ENCODE measurements at regions of chr12 and their contacts with region 1.

Region 1: GRCh38 chr12:3073438-3074250 is 3.5 kb upstream of the TSPAN9 start:
- DNase-seq: peak; percentile 91
- ATAC-seq: peak; percentile 70
- H3K4me3 Mint-ChIP-seq: no peak overlapping the region
- H3K27ac Mint-ChIP-seq: no peak overlapping the region
- H3K4me1 Mint-ChIP-seq: peaks cover 2% of the 10 kb centered on the region
- H3K27me3 Mint-ChIP-seq: peaks cover 2% of the 10 kb centered on the region

Region 2: DNA sequence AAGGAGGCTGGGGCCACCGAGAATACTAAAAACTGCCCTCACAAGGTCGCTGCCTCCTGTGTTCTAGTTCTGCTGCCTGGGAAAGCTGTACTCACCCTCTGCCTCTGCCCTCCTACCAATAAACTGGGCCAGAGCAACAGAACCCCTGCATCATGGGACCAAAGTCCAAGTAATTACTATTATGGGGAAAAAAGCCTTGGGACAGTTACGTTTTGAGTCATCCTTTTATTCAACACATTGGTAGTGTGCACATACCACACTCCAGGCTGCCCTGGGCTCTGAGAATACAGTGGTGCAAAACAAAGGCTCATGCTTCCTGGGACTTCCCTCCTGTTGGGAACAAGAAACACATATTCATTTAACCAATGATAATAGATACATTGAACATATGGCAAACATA is 971.9 kb before region 1 on chr12:
- CTCF ChIA-PET with region 1: no interaction called
- POLR2A ChIA-PET with region 1: no interaction called
- intact Hi-C with region 1: no loop called
- DNase-seq: no peak
- ATAC-seq: no peak
- H3K4me3 Mint-ChIP-seq: no peak overlapping the region
- H3K27ac Mint-ChIP-seq: no peak overlapping the region
- H3K4me1 Mint-ChIP-seq: no peaks in the 10 kb centered on the region
- H3K27me3 Mint-ChIP-seq: no peaks in the 10 kb centered on the region

Region 3: GRCh38 chr12:2691006-2691344 is 382.7 kb before region 1 on chr12:
- CTCF ChIA-PET with region 1: no interaction called
- POLR2A ChIA-PET with region 1: no interaction called
- intact Hi-C with region 1: loop called in 1 of 2 experiments (anchors 2 kb)
- DNase-seq: peak; percentile 76
- ATAC-seq: peak; percentile 66
- H3K4me3 Mint-ChIP-seq: peak overlapping the region; percentile 79
- H3K27ac Mint-ChIP-seq: peak overlapping the region; percentile 79
- H3K4me1 Mint-ChIP-seq: peaks cover 26% of the 10 kb centered on the region
- H3K27me3 Mint-ChIP-seq: peaks cover 5% of the 10 kb centered on the region

Region 4: DNA sequence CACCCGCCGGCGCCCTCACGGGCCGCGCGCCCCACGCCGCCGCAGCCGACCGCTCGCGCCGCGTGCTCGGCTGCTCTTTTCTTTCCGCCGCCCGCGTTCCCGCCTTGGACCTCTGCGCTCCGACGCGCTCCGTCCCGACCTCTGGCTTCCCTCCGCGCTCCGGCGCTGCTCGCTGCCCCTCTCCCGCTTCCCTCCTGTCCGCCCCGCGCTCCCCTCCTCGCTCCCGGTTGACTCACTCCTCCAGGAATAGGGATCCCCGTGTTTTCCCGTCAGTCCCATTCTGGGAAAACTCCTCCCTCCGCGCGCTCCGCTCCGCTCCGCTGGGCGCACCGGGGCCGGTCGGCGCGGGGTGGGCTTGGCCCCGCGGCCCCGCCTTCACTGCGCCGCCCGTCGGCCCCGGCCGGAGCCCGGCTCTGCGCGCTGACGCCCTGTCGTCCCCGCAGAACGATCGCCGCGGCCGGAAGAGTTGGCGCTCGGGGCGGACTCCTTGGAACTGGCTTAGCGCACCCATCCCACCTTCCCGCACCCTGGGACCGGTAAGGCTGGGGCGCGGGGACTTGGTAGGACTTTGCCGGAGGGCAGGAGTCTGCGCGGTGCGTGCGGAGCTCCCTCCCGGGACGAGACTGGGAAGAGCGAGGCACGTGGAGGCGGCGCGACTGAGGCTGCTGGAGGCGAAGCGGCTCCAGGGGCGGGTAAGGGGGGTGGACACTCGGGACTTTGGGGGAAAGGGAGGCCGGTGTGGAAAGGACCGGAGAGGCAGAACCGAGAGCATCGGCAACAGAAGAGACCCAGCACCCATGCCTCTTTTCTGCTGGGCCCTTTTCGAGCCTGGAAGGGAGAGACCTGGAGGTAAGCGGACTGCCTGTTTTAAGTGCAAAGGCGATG is 113.9 kb before region 1 on chr12:
- CTCF ChIA-PET with region 1: no interaction called
- POLR2A ChIA-PET with region 1: no interaction called
- intact Hi-C with region 1: loop called in 1 of 2 experiments (anchors 1 kb)
- DNase-seq: peak; percentile 51
- ATAC-seq: peak; percentile 23
- H3K4me3 Mint-ChIP-seq: peak overlapping the region; percentile 61
- H3K27ac Mint-ChIP-seq: peak overlapping the region; percentile 49
- H3K4me1 Mint-ChIP-seq: peaks cover 18% of the 10 kb centered on the region
- H3K27me3 Mint-ChIP-seq: peaks cover 54% of the 10 kb centered on the region

Region 5: DNA sequence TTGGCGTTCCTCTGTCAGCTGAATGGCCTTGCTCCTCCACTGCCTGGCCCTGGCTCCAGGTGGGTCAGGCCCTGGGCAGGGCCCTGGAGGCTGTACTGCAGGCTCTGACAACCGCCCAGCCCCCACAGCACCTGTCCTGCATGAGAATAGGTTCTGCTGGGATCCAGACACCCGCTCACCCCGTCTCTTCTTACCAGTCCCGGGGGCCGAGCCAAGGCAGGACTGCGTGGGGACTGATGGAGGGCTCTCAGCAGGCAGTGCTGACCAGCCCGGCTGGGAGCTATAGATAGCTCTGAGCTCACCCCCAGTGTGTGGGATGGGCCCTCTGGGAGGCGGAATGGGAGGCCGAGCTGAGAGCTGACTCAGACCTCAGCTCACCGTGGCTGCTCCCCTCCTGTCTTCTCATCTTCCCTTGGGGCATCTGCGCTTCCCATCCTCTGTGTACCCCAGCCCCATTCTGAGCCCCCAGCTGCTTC is 74.8 kb before region 1 on chr12:
- CTCF ChIA-PET with region 1: no interaction called
- POLR2A ChIA-PET with region 1: no interaction called
- intact Hi-C with region 1: no loop called
- DNase-seq: no peak
- ATAC-seq: no peak
- H3K4me3 Mint-ChIP-seq: no peak overlapping the region
- H3K27ac Mint-ChIP-seq: no peak overlapping the region
- H3K4me1 Mint-ChIP-seq: no peaks in the 10 kb centered on the region
- H3K27me3 Mint-ChIP-seq: no peaks in the 10 kb centered on the region

Region 6: DNA sequence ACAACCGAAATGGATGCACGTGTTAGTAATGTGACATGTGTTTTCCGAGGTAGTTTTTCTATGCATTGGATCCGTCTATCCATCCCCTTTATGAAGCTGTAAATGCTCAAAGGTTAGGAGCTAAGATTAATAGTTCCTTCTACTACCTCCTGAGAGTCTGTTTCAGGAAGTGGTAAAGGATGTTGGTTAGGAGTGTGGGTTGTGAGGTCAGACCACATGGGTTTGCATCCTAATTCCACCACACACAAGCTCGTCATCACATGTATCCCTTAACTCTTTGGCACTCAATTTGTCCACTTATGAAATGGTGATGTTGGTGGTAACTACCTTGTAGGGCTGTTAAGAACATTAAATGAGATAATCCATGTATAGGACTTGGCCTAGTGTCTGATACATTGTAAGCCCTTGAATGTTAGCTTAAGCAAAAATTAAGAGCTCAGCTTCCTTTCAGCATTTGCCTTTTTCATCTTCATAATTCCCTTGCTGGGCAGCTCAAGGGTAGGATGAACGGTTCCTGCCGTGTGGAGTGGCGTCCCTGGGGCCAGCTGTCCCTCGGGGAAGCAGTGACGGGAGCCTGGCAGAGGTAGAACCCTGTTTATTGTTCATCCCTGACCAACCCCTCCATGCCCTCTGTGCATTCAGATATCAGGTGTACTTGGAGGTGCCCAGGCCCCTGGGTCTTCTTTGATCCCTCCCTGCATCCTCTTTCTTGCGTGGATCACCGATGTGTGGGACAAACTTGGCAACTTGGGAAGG is 55.8 kb after region 1 on chr12:
- CTCF ChIA-PET with region 1: interaction called, 8 read pairs
- POLR2A ChIA-PET with region 1: no interaction called
- intact Hi-C with region 1: loop called in 1 of 2 experiments (anchors 5 kb)
- DNase-seq: peak; percentile 49
- ATAC-seq: peak; percentile 36
- H3K4me3 Mint-ChIP-seq: no peak overlapping the region
- H3K27ac Mint-ChIP-seq: no peak overlapping the region
- H3K4me1 Mint-ChIP-seq: peaks cover 21% of the 10 kb centered on the region
- H3K27me3 Mint-ChIP-seq: peaks cover 54% of the 10 kb centered on the region

Region 7: DNA sequence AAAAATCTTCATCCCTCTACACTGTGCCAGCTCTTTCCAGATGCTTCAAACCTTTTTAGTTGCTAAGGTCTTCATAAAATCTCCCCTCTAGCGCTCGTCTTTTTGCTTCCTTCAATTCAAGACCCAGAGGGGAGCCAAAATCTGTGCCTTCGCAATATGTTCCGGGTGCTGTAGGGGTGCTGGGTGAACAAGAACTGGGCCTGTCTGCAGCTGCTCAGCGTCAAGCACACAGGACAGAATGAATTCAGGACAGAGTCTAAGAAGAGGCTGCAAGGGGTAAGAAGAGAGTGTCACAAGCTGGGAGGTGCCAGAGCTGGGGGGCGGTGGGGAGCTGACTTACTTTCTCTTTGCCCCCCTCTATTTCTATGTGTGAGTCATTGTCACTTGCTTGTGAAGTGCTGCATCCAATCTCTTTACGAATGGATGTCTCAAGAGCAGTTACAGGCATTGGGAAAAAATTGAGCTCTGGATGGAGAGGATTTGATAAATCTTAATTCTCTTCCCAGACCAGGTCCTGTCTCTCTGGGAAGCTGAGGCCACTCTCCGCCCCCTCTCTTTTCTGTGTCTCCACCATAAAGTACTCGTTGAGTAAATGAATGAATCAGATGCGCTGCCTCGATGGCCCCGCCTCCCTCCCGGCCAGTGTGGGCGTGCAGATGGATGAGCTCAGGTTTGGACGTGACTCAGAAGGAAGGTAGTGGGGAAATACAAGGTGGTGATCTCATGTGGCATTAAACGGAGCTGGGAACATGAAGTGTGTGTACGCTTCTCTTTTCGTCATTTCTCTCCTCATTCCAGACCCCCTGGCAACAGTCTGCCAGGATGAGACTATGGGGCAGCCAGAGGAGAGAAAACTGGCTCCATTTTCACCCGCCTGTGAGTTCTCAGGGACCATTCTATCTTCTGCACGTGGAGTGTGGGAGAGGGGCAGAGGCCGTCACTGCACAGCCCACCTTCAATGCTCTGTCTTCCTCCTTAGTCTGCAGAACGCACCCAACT is 94.9 kb after region 1 on chr12:
- CTCF ChIA-PET with region 1: interaction called, 5 read pairs
- POLR2A ChIA-PET with region 1: no interaction called
- intact Hi-C with region 1: loop called in 1 of 2 experiments (anchors 1 kb)
- DNase-seq: peak; percentile 88
- ATAC-seq: peak; percentile 95
- H3K4me3 Mint-ChIP-seq: no peak overlapping the region
- H3K27ac Mint-ChIP-seq: no peak overlapping the region
- H3K4me1 Mint-ChIP-seq: peaks cover 13% of the 10 kb centered on the region
- H3K27me3 Mint-ChIP-seq: peaks cover 6% of the 10 kb centered on the region

Region 8: DNA sequence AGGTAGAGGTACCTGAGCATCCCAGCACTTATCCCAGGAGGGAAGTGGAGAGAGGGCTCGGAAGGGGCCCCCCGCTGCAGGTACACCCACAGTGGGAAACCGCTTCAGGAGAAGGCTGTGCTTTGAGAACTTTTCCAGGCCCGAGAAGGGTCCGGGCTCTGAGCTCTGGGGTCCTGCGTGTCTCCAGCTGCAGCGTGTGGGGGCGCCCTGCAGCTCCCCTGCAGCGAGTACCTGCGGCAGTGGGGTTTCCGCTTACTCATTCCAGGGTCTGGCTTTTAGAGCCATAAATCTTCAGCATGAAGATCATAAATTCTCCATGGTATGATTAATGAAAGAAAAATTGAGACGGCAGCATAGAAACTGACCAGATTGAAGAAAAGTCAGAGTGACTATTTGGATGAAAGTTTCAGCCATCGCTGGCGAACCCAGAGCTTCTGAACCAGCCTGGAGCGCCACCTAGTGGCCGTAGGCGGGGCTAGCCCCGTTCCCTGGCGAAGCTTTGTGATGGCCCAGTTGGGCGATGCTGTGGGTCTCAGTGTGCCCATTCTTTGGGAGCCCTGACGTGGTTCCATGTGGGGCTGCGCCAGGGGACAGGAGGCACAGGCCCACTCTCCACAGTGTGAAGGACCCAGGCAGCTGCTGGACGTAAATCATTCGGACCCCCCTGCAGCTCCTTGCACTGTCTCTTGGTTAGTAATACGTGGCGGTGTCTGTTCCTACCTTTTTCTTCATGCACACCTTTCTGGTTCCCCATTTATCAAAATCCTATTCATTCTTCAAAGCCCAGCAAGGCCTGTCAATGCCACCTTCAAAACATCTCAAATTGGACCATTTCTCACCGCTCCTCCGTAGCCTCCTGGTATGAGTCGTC is 201.8 kb after region 1 on chr12:
- CTCF ChIA-PET with region 1: interaction called, 35 read pairs
- POLR2A ChIA-PET with region 1: no interaction called
- intact Hi-C with region 1: loop called (anchors 1 kb)
- DNase-seq: peak; percentile 87
- ATAC-seq: peak; percentile 83
- H3K4me3 Mint-ChIP-seq: no peak overlapping the region
- H3K27ac Mint-ChIP-seq: no peak overlapping the region
- H3K4me1 Mint-ChIP-seq: peaks cover 2% of the 10 kb centered on the region
- H3K27me3 Mint-ChIP-seq: peaks cover 8% of the 10 kb centered on the region

Measured in activated CD4-positive, alpha-beta T cell treated with anti-CD3 and anti-CD28 coated beads for 36 hours (primary cell).